GM18951 (cell line): ENCODE measurements at regions of chr11 and their contacts with region 1.

Region 1: GRCh38 chr11:61899146-61899841 is 7.9 kb upstream of the FADS3 start:
- POLR2A ChIP-seq: no peak

Region 2: DNA sequence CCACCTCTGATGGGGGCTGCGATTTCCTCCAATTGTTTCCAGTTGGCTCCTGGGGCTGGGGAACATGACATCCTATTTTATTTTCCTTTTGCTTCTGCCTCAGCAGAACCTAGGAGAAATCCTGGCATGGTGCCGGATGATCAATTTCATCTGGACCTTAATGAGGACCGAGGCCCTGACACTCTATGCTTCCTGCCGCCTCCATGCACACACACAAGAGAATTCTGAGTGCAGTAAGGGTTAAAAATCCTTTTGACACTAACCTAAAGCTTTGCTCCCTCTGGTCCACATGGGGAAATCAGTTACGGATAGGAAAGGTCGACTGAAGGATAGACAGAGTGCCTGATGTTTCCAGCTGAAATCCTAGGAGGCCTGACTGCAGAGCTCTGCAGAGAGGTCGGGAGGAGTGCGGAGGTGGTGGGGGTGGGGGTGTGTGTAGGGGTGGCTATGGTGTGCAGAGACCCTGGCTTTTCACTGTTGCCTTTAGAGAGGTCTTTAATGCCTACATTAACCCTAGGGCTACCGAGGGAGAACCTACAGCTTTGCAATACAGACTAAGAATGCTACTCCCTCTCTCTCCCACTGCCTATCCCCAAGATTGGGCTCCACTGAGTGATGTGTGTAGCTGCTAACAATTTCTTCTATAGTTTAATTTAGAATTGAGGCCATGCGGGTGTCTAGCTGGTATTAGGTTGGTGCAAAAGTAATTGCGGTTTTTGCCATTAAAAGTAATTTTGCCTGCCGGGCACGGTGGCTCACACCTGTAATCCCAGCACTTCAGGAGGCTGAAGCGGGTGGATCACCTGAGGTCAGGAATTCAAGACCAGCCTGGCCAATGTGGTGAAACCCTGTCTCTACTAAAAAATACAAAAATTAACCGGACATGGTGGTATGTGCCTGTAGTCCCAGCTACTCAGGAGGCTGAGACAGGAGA is 171.0 kb after region 1 on chr11:
- in situ Hi-C with region 1: loop called (anchors 10 kb)
- POLR2A ChIP-seq: no peak